ENCODE measurements at regions of chr1 and their contacts with region 1.

Region 1: GRCh38 chr1:101520302-101520701 is 283.5 kb downstream of the S1PR1 start:
- DNase-seq: no peak
- ATAC-seq: no peak
- H3K4me3 Mint-ChIP-seq: no peak overlapping the region
- H3K27ac Mint-ChIP-seq: no peak overlapping the region
- H3K4me1 Mint-ChIP-seq: peaks cover 6% of the 10 kb centered on the region
- H3K27me3 Mint-ChIP-seq: peaks cover 11% of the 10 kb centered on the region
- CTCF ChIP-seq: no peak

Region 2: DNA sequence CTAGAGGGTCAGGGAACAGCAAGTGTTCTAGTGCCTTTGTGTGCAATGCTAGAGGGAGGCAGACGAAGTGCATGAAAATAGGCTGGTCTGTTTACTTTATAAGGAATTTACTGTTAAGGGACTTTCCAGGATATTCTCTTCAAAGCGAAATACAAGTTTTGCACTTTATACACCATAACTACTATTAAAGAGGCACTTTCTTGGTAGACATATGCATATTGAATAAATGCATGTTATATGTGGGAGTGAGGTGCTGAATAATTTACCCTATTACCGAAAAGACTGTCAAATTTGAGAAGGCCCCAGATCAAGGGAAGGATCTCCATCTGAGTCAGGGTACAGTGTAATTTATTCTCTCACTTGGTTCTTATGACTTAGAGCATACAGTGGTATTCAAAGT is 27.1 kb after region 1 on chr1:
- CTCF ChIA-PET with region 1: no interaction called
- POLR2A ChIA-PET with region 1: no interaction called
- intact Hi-C with region 1: no loop called
- DNase-seq: no peak
- ATAC-seq: no peak
- H3K4me3 Mint-ChIP-seq: no peak overlapping the region
- H3K27ac Mint-ChIP-seq: no peak overlapping the region
- H3K4me1 Mint-ChIP-seq: no peaks in the 10 kb centered on the region
- H3K27me3 Mint-ChIP-seq: peaks cover 3% of the 10 kb centered on the region
- CTCF ChIP-seq: no peak

Region 3: DNA sequence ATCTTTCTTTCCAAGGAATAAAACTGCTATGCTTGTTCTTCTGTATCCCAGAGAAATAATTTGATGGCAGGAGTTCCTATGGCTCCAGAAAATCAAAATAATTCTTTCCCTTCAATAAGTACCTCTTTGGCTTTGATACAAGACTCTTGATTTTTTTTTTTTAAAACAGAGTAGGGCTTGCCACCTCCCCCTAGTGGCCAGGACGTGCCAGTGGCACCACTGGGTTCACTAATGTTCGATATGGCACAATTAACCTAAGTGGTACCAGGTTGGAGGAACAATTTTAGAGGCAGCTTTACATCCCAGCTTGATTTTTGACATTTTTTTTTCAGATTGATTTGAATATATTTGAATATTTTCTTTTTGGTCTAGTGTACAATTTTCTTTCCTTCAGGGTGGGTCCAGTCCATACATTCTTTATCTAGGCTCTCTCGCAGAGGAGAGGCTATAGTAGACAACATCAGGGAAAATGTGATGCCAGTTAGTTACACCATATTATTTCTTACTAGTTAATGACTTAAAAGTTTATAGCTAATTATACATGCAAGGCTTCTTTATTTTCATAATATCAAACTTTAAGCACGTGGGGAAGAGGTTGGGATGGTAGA is 47.4 kb after region 1 on chr1:
- CTCF ChIA-PET with region 1: interaction called, 5 read pairs
- POLR2A ChIA-PET with region 1: no interaction called
- intact Hi-C with region 1: loop called (anchors 2 kb)
- DNase-seq: peak; percentile 17
- ATAC-seq: peak; percentile 76
- H3K4me3 Mint-ChIP-seq: no peak overlapping the region
- H3K27ac Mint-ChIP-seq: no peak overlapping the region
- H3K4me1 Mint-ChIP-seq: no peaks in the 10 kb centered on the region
- H3K27me3 Mint-ChIP-seq: peaks cover 14% of the 10 kb centered on the region
- CTCF ChIP-seq: peak; percentile 99

Region 4: GRCh38 chr1:101618900-101619299 is 98.6 kb after region 1 on chr1:
- CTCF ChIA-PET with region 1: no interaction called
- POLR2A ChIA-PET with region 1: no interaction called
- intact Hi-C with region 1: no loop called
- DNase-seq: no peak
- ATAC-seq: no peak
- H3K4me3 Mint-ChIP-seq: no peak overlapping the region
- H3K27ac Mint-ChIP-seq: no peak overlapping the region
- H3K4me1 Mint-ChIP-seq: no peaks in the 10 kb centered on the region
- H3K27me3 Mint-ChIP-seq: no peaks in the 10 kb centered on the region
- CTCF ChIP-seq: no peak

Region 5: GRCh38 chr1:101667761-101668160 is 147.5 kb after region 1 on chr1:
- CTCF ChIA-PET with region 1: no interaction called
- POLR2A ChIA-PET with region 1: no interaction called
- intact Hi-C with region 1: no loop called
- DNase-seq: no peak
- ATAC-seq: no peak
- H3K4me3 Mint-ChIP-seq: no peak overlapping the region
- H3K27ac Mint-ChIP-seq: no peak overlapping the region
- H3K4me1 Mint-ChIP-seq: no peaks in the 10 kb centered on the region
- H3K27me3 Mint-ChIP-seq: no peaks in the 10 kb centered on the region
- CTCF ChIP-seq: no peak

Region 6: DNA sequence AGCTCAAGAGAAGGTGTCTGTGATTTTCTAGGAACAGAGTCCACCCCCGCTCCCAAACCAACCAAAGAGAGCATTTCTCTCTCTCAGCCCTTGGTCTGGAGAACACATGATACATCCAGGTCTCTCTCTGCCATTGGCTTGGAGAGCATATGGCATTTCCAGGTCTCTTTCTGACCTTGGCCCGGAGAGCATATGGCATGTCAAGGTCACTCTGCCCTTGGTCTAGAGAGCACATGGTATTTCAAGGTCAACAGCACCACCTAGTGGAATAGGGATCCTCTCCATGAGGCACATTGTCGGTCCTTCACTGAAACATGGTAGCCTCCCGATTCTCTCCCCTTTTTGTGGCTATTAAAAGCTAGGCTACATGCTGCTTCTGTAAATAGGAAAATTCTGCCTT is 914.1 kb after region 1 on chr1:
- CTCF ChIA-PET with region 1: interaction called, 3 read pairs
- POLR2A ChIA-PET with region 1: no interaction called
- intact Hi-C with region 1: loop called (anchors 5 kb)
- DNase-seq: no peak
- ATAC-seq: no peak
- H3K4me3 Mint-ChIP-seq: no peak overlapping the region
- H3K27ac Mint-ChIP-seq: no peak overlapping the region
- H3K4me1 Mint-ChIP-seq: no peaks in the 10 kb centered on the region
- H3K27me3 Mint-ChIP-seq: no peaks in the 10 kb centered on the region
- CTCF ChIP-seq: no peak

Region 7: DNA sequence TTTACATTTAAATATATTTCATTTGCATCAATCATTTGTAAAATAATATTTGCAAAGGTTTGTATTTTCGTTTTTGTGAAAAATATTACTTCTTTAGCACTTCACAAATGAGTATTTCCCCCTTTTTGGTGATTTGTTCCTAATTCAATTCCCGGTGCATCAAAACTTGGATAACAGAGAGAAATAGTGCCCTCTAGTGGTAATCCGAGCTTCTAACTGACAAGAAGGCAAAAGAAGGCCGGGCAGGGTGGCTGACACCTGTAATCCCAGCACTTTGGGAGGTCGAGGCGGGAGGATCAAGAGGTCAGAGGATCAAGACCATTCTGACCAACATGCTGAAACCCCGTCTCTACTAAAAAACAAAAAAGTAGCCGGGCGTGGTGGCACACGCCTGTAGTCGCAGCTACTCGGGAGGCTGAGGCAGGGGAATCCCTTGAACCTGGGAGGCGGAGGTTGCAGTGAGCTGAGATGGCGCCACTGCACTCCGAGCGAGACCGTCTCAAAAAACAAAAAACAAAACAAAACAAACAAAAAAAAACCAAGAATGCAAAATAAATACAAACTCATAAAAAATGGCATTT is 1450.3 kb after region 1 on chr1:
- CTCF ChIA-PET with region 1: no interaction called
- POLR2A ChIA-PET with region 1: no interaction called
- intact Hi-C with region 1: loop called (anchors 5 kb)
- DNase-seq: no peak
- ATAC-seq: no peak
- H3K4me3 Mint-ChIP-seq: no peak overlapping the region
- H3K27ac Mint-ChIP-seq: no peak overlapping the region
- H3K4me1 Mint-ChIP-seq: no peaks in the 10 kb centered on the region
- H3K27me3 Mint-ChIP-seq: no peaks in the 10 kb centered on the region
- CTCF ChIP-seq: no peak

Measured in activated B cell treated with CpG ODN at 0.5 μM for 24 hours (primary cell).